ENCODE measurements at regions of chr17 and their contacts with region 1.

Region 1: GRCh38 chr17:7687908-7688807 is at the start of gene WRAP53:
- DNase-seq: peak; percentile 99
- H3K4me3 ChIP-seq: peak within 1 kb of the TSS; percentile 75 to 96 (median 79)
- H3K27ac ChIP-seq: peak within 1 kb of the TSS; percentile 93
- H3K4me1 ChIP-seq: peaks cover 26% of the 10 kb centered on the region
- H3K27me3 ChIP-seq: no peaks in the 10 kb centered on the region
- CTCF ChIP-seq: peak; percentile 97 to 99
- POLR2A ChIP-seq: peak; percentile 70
- total RNA-seq, gene WRAP53: 23.7 and 28.0 TPM in 2 replicates

Region 2: GRCh38 chr17:7403977-7404736 is 284.0 kb before region 1 on chr17 and contains the start of gene TMEM256:
- CTCF ChIA-PET with region 1: interaction called, 4 read pairs
- POLR2A ChIA-PET with region 1: interaction called, 7 read pairs
- dilution Hi-C with region 1: no loop called
- intact Hi-C with region 1: loop called (anchors 2 kb)
- DNase-seq: peak; percentile 99
- H3K4me3 ChIP-seq: peak within 1 kb of the TSS; percentile 43 to 61 (median 52)
- H3K27ac ChIP-seq: peak within 1 kb of the TSS; percentile 21
- H3K4me1 ChIP-seq: peaks cover 12% of the 10 kb centered on the region
- H3K27me3 ChIP-seq: no peaks in the 10 kb centered on the region
- CTCF ChIP-seq: peak in 1 of 2 donors; percentile 2
- POLR2A ChIP-seq: peak; percentile 93
- total RNA-seq, gene TMEM256: 57.3 and 67.4 TPM in 2 replicates

Region 3: GRCh38 chr17:7572588-7573323 is 115.4 kb before region 1 on chr17:
- CTCF ChIA-PET with region 1: interaction called, 5 read pairs
- POLR2A ChIA-PET with region 1: interaction called, 9 read pairs
- dilution Hi-C with region 1: no loop called
- intact Hi-C with region 1: loop called (anchors 2 kb)
- DNase-seq: peak; percentile 100
- H3K4me3 ChIP-seq: peak overlapping the region; percentile 86 to 96 (median 87)
- H3K27ac ChIP-seq: peak overlapping the region; percentile 91
- H3K4me1 ChIP-seq: peaks cover 43% of the 10 kb centered on the region
- H3K27me3 ChIP-seq: no peaks in the 10 kb centered on the region
- CTCF ChIP-seq: no peak
- POLR2A ChIP-seq: peak; percentile 99

Region 4: DNA sequence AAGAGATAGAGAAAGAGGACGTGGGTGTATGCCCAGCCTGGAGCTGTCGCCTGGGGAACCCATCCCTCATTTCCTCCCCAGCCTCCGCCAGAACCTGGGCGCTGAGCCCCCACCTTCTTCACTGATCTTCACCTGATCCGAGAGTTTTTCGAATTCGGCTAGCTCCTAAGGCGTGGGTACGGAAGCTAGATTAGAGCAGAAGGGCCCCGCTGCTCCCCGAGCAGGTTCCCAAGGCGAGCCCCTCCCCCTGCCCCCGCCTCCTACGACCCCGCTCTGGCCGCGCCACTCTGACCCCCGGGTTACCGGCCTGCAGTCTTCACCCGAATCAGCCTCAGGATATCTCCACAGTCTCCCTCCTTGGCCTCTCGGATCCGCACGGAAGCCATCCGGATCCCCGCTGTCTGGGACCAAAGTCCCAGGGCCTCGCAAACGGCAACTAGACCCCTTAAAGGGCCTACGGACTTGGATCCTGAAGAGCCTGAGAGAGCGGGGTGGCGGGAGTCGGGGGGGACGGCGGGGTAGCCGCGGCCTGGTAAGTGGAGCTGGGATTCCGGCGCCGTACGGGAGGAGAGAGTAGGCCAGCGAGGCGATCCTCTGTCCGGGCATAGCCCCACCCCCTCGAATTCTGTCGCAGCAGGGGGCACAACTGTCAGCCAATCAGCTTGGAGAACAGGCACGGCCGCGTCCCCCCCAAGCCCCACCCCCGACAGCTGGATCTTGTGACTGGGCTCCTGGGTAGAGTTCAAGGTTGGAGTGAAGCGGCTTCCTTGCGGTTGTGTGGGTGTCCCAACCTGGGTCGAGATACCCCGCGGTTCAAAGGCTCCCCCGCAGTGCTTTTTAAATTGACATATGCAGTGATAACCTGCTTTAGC is 60.7 kb before region 1 on chr17 and contains the start of gene SAT2:
- CTCF ChIA-PET with region 1: interaction called, 97 read pairs
- POLR2A ChIA-PET with region 1: interaction called, 3 read pairs
- dilution Hi-C with region 1: no loop called
- intact Hi-C with region 1: no loop called
- DNase-seq: peak; percentile 92
- H3K4me3 ChIP-seq: peak within 1 kb of the TSS; percentile 67 to 87 (median 81)
- H3K27ac ChIP-seq: peak within 1 kb of the TSS; percentile 66
- H3K4me1 ChIP-seq: no peaks in the 10 kb centered on the region
- H3K27me3 ChIP-seq: no peaks in the 10 kb centered on the region
- CTCF ChIP-seq: no peak
- POLR2A ChIP-seq: peak; percentile 90
- total RNA-seq, gene SAT2: 51.8 and 52.5 TPM in 2 replicates

Region 5: DNA sequence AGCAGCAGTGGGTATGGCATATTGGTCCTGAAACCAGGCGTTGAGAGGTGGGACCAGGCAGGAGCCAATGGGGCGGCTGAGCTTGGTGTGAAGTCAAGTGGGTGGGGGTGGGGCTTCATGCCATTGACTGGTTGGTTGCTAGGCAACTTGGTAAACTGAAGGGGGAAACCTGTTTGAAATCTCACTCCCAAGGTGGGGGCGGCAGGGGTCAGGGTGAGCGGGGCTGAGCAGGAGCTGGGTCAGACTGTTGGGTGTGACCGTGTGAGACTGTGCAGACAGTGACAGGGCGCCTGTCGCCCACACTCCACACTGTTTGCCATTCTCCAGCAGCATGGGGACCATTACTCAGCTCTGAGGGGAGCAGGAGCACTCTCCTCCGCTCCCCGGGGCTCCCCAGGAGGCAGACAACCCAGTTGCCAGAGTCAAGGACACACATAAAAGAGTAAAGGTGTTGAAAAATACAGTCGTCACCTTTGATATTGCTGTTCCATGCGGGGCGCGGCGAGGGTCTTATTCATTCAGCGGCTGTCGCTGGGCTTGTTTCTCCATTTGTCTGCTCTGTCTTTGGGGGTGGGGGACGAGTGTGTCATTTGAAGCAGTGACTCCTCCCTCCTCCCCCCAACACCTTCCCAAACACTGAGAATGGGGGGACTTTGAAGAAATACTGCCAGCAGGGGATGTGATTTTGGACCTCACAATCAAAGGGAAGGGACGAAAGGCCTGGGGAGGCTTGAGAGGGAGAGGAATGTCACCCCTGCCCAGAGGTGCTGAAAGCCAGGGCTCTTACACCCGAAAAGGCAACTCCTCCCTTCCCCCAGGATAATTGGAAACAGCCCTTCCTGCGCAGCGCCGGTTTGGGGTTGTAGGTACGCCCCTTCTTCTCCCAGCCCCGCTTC is 15.7 kb after region 1 on chr17:
- CTCF ChIA-PET with region 1: interaction called, 11 read pairs
- POLR2A ChIA-PET with region 1: interaction called, 3 read pairs
- dilution Hi-C with region 1: no loop called
- intact Hi-C with region 1: no loop called
- DNase-seq: peak; percentile 22
- H3K4me3 ChIP-seq: no peak overlapping the region
- H3K27ac ChIP-seq: no peak overlapping the region
- H3K4me1 ChIP-seq: peaks cover 3% of the 10 kb centered on the region
- H3K27me3 ChIP-seq: peaks cover 33 to 35% of the 10 kb centered on the region in 2 experiments
- CTCF ChIP-seq: no peak
- POLR2A ChIP-seq: no peak

Region 6: GRCh38 chr17:7856883-7857723 is 168.9 kb after region 1 on chr17 and contains the start of gene NAA38:
- CTCF ChIA-PET with region 1: interaction called, 3 read pairs
- POLR2A ChIA-PET with region 1: no interaction called
- dilution Hi-C with region 1: no loop called
- intact Hi-C with region 1: loop called (anchors 2 kb)
- DNase-seq: peak; percentile 99
- H3K4me3 ChIP-seq: peak within 1 kb of the TSS; percentile 53 to 78 (median 54)
- H3K27ac ChIP-seq: peak within 1 kb of the TSS; percentile 96
- H3K4me1 ChIP-seq: peaks cover 35% of the 10 kb centered on the region
- H3K27me3 ChIP-seq: no peaks in the 10 kb centered on the region
- CTCF ChIP-seq: peak; percentile 17 to 34
- POLR2A ChIP-seq: peak; percentile 84
- total RNA-seq, gene NAA38: 119 TPM in 2 replicates